Naive thymus-derived CD4-positive, alpha-beta T cell (primary cell): ENCODE measurements at regions of chr20 and their contacts with region 1.

Region 1: GRCh38 chr20:63864847-63865640 is at the start of gene TPD52L2:
- DNase-seq: peak; percentile 86 to 98 (median 96)
- ATAC-seq: peak; percentile 91
- H3K4me3 ChIP-seq: peak within 1 kb of the TSS; percentile 74
- H3K4me3 Mint-ChIP-seq: peak within 1 kb of the TSS; percentile 88 to 100 (median 98)
- H3K27ac ChIP-seq: peak within 1 kb of the TSS; percentile 84
- H3K27ac Mint-ChIP-seq: peak within 1 kb of the TSS; percentile 91 to 99 (median 97)
- H3K4me1 ChIP-seq: peaks cover 11 to 14% of the 10 kb centered on the region in 2 donors
- H3K4me1 Mint-ChIP-seq: peaks cover 27 to 42% (median 36%) of the 10 kb centered on the region in 7 donors
- H3K27me3 ChIP-seq: no peaks in the 10 kb centered on the region
- H3K27me3 Mint-ChIP-seq: no peaks in the 10 kb centered on the region
- total RNA-seq, gene TPD52L2: 33.7 to 56.8 (median 43.2) TPM

Region 2: DNA sequence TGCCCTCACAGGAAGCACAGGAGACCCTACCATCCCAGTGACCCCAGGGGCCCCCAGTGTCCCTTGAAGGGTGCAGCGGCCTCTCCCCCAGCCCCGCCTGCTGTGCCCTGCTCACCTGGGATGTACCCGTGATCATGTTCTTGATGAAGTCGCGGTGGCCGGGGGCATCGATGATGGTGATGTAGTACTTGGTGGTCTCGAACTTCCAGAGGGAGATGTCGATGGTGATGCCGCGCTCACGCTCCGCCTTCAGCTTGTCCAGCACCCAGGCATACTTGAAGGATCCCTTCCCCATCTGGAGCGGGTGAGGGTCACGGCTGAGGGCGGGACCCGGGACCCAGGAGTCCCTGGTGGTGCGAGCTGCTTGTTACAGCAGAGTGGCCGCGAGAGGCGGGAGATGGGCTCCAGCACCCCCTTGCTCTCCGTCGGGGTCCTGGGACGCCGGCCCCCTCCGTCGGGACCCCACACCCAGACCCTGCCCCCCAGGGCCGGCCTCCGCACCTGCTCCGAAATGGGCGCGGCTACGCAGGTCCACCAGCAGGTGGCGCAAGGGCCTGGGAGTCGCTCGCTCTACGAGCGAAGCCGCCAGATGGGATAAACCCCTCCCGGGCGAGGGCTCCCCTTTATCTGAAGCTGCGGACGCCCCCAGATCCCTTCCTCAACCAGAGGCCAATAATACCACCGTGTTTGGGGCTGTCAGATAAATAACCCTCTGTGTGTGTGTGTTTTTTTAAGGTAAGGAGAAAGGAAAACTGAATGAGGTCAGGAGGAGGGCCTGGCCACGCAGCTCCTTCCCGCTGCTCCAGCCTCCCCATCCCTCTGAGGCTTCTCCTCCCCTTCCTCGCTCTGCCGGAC is 369.1 kb before region 1 on chr20:
- CTCF ChIA-PET with region 1: no interaction called
- POLR2A ChIA-PET with region 1: no interaction called
- intact Hi-C with region 1: loop called in 1 of 2 experiments (anchors 2 kb)
- DNase-seq: peak; percentile 43 to 82 (median 71)
- ATAC-seq: peak; percentile 72
- H3K4me3 ChIP-seq: no peak overlapping the region
- H3K4me3 Mint-ChIP-seq: peak overlapping the region; percentile 41 to 75 (median 66)
- H3K27ac ChIP-seq: no peak overlapping the region
- H3K27ac Mint-ChIP-seq: no peak overlapping the region
- H3K4me1 ChIP-seq: peaks cover 0 to 2% of the 10 kb centered on the region in 2 donors
- H3K4me1 Mint-ChIP-seq: peaks cover 0 to 4% (median 0%) of the 10 kb centered on the region in 7 donors
- H3K27me3 ChIP-seq: no peaks in the 10 kb centered on the region
- H3K27me3 Mint-ChIP-seq: peaks cover 0 to 28% (median 8%) of the 10 kb centered on the region in 5 donors

Region 3: DNA sequence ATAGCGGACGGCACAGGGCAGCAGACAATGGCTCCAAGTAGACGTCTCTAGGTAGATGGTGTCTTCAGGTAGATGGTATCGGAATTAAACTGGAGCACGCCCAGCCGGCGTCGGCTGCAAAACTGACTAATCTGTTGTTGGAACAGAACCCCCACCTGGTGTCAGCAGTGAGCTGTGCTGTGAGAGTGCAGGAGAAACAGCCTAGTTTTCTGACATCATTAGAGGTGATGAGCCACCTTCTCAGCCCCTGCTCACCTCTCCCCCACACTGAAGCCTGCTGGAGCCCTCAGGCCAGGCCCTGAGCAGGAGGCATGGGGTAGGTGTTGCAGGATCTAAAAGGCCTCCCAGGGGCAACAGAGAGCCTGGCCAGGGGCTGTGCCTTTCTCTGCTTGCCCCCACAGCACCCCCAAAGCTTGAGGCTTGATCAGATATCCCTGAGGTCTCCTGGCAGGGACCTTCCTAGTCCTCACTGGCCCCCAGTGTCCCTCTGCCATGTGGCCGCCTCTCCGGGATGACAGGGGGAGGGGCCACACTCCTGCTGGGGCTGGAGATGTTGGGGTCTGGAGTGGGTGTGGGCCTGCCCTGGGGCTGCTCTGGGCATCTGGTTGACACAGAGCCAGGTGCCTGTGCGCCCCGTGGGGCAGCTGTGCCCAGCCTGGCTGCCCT is 284.1 kb before region 1 on chr20:
- CTCF ChIA-PET with region 1: no interaction called
- POLR2A ChIA-PET with region 1: no interaction called
- intact Hi-C with region 1: loop called in 1 of 2 experiments (anchors 1 kb)
- DNase-seq: peak; percentile 30 to 87 (median 81)
- ATAC-seq: peak; percentile 96
- H3K4me3 ChIP-seq: no peak overlapping the region
- H3K4me3 Mint-ChIP-seq: peak overlapping the region in 1 of 10 donors; percentile 17
- H3K27ac ChIP-seq: no peak overlapping the region
- H3K27ac Mint-ChIP-seq: peak overlapping the region in 1 of 9 donors; percentile 74
- H3K4me1 ChIP-seq: peaks cover 0 to 10% of the 10 kb centered on the region in 2 donors
- H3K4me1 Mint-ChIP-seq: peaks cover 0 to 17% (median 14%) of the 10 kb centered on the region in 7 donors
- H3K27me3 ChIP-seq: no peaks in the 10 kb centered on the region
- H3K27me3 Mint-ChIP-seq: peaks cover 0 to 42% (median 0%) of the 10 kb centered on the region in 5 donors

Region 4: GRCh38 chr20:63686492-63687321 is 178.3 kb before region 1 on chr20:
- CTCF ChIA-PET with region 1: no interaction called
- POLR2A ChIA-PET with region 1: no interaction called
- intact Hi-C with region 1: no loop called
- DNase-seq: peak in 2 of 9 donors; percentile 30 to 46
- ATAC-seq: peak; percentile 79
- H3K4me3 ChIP-seq: no peak overlapping the region
- H3K4me3 Mint-ChIP-seq: peak overlapping the region in 5 of 10 donors; percentile 13 to 33 (median 33)
- H3K27ac ChIP-seq: no peak overlapping the region
- H3K27ac Mint-ChIP-seq: no peak overlapping the region
- H3K4me1 ChIP-seq: peaks cover 0 to 16% of the 10 kb centered on the region in 2 donors
- H3K4me1 Mint-ChIP-seq: peaks cover 0 to 13% (median 5%) of the 10 kb centered on the region in 7 donors
- H3K27me3 ChIP-seq: no peaks in the 10 kb centered on the region
- H3K27me3 Mint-ChIP-seq: no peaks in the 10 kb centered on the region

Region 5: GRCh38 chr20:63707549-63708300 is 157.3 kb before region 1 on chr20 and contains the starts of genes ARFRP1 and ZGPAT:
- CTCF ChIA-PET with region 1: interaction called, 7 read pairs
- POLR2A ChIA-PET with region 1: interaction called, 11 read pairs
- intact Hi-C with region 1: loop called (anchors 1 kb)
- DNase-seq: peak; percentile 77 to 92 (median 88)
- ATAC-seq: peak; percentile 92
- H3K4me3 ChIP-seq: peak within 1 kb of the TSS; percentile 91
- H3K4me3 Mint-ChIP-seq: peak within 1 kb of the TSS; percentile 86 to 95 (median 90)
- H3K27ac ChIP-seq: peak within 1 kb of the TSS; percentile 81
- H3K27ac Mint-ChIP-seq: peak within 1 kb of the TSS; percentile 82 to 97 (median 87)
- H3K4me1 ChIP-seq: peaks cover 22 to 30% of the 10 kb centered on the region in 2 donors
- H3K4me1 Mint-ChIP-seq: peaks cover 33 to 61% (median 46%) of the 10 kb centered on the region in 7 donors
- H3K27me3 ChIP-seq: no peaks in the 10 kb centered on the region
- H3K27me3 Mint-ChIP-seq: no peaks in the 10 kb centered on the region
- total RNA-seq, gene ARFRP1: 55.4 to 92.1 (median 66.2) TPM
- total RNA-seq, gene ZGPAT: 42.9 to 49.9 (median 45.4) TPM

Region 6: GRCh38 chr20:63830841-63831588 is 34.0 kb before region 1 on chr20 and contains the start of gene ZBTB46:
- CTCF ChIA-PET with region 1: no interaction called
- POLR2A ChIA-PET with region 1: no interaction called
- intact Hi-C with region 1: loop called (anchors 2 to 5 kb)
- DNase-seq: peak in 1 of 9 donors; percentile 72
- ATAC-seq: peak; percentile 82
- H3K4me3 ChIP-seq: peak within 1 kb of the TSS; percentile 40
- H3K4me3 Mint-ChIP-seq: peak within 1 kb of the TSS; percentile 65 to 97 (median 86)
- H3K27ac ChIP-seq: no peak within 1 kb of the TSS
- H3K27ac Mint-ChIP-seq: peak within 1 kb of the TSS in 3 of 9 donors; percentile 6 to 77 (median 75)
- H3K4me1 ChIP-seq: peaks cover 4 to 10% of the 10 kb centered on the region in 2 donors
- H3K4me1 Mint-ChIP-seq: peaks cover 9 to 12% (median 10%) of the 10 kb centered on the region in 7 donors
- H3K27me3 ChIP-seq: peaks cover 4 to 24% of the 10 kb centered on the region in 2 donors
- H3K27me3 Mint-ChIP-seq: peaks cover 23 to 49% (median 27%) of the 10 kb centered on the region in 5 donors
- total RNA-seq, gene ZBTB46: 0.05 to 1.7 (median 0.21) TPM in 4 of 5 experiments, not detected in the other

Region 7: DNA sequence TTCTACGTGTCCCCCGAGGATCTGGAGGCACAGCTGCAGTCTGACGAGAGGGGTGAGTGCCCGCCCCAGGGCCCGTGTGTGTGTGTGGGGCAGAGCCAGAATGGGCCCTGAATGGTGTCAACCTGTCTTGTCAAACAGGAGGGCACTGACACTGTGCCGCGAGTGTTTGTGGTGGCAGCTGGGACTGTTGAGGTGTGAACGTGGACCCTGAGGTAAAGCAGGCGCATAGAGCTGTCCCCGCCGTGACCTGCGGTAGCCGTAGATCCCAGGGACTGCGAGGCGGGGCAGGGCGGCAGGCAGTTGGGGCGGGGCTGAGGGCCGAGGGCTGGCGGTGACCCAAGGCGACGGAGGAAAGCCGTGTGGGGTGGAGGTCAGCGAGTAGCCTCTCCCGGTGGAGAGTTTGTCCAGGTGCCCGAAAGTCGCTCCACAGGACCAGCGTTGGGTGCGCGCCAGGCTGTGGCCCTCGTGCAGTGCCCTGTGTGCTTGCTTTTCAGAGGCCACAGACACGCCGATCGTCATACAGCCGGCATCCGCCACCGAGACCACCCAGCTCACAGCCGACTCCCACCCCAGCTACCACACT is 66.0 kb after region 1 on chr20:
- CTCF ChIA-PET with region 1: no interaction called
- POLR2A ChIA-PET with region 1: no interaction called
- intact Hi-C with region 1: no loop called
- DNase-seq: no peak
- ATAC-seq: no peak
- H3K4me3 ChIP-seq: no peak overlapping the region
- H3K4me3 Mint-ChIP-seq: no peak overlapping the region
- H3K27ac ChIP-seq: no peak overlapping the region
- H3K27ac Mint-ChIP-seq: no peak overlapping the region
- H3K4me1 ChIP-seq: no peaks in the 10 kb centered on the region
- H3K4me1 Mint-ChIP-seq: peaks cover 5 to 17% (median 12%) of the 10 kb centered on the region in 7 donors
- H3K27me3 ChIP-seq: no peaks in the 10 kb centered on the region
- H3K27me3 Mint-ChIP-seq: no peaks in the 10 kb centered on the region

Region 8: DNA sequence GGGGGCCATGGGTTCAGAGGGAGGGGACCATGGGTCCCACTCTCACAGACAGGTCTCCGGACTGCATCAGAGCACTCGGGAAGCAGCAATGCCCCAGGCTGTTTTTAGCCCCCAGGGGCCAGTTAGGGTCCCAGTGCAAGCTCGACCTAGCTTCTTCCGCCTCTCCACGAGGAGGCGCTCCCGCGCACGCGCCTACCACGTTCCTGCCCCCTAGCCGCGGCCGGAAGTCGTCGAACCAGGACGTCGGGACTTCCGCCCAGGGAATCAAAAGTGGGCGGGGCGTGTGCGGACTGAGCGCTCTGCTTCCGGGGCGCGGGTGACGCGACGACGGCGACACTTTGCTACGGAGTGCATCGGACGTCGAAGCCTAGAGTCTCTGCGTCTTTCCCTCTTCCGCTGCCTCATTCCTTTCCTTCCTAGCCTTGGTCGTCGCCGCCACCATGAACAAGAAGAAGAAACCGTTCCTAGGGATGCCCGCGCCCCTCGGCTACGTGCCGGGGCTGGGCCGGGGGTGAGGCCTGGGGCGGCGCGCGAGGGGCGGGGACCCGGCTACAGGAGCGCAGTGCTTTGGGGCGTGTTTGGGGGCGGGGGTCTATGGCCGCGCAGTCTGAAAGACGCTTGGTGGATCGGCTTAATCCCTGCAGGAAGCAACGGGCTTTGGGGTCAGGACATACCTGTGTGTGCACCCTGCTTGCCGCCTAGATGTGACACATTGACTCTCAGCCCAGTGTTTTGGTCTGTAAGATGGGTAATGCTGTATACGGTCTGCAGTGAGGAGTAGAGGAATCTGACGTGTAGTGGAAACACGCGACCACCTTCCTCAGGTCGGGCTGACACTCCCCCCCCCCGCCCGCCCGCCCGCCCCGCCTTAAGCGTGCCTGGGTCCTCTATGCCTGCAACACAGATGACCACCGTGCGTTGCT is 116.0 kb after region 1 on chr20 and contains the start of gene PRPF6:
- CTCF ChIA-PET with region 1: no interaction called
- POLR2A ChIA-PET with region 1: interaction called, 15 read pairs
- intact Hi-C with region 1: loop called (anchors 1 kb)
- DNase-seq: peak; percentile 89 to 95 (median 92)
- ATAC-seq: peak; percentile 85
- H3K4me3 ChIP-seq: peak within 1 kb of the TSS; percentile 78
- H3K4me3 Mint-ChIP-seq: peak within 1 kb of the TSS; percentile 88 to 97 (median 95)
- H3K27ac ChIP-seq: peak within 1 kb of the TSS; percentile 95
- H3K27ac Mint-ChIP-seq: peak within 1 kb of the TSS; percentile 87 to 99 (median 96)
- H3K4me1 ChIP-seq: peaks cover 34 to 47% of the 10 kb centered on the region in 2 donors
- H3K4me1 Mint-ChIP-seq: peaks cover 53 to 77% (median 65%) of the 10 kb centered on the region in 7 donors
- H3K27me3 ChIP-seq: no peaks in the 10 kb centered on the region
- H3K27me3 Mint-ChIP-seq: no peaks in the 10 kb centered on the region
- total RNA-seq, gene PRPF6: 71.2 to 95.8 (median 82.9) TPM